A673 (cell line): ENCODE measurements at regions of chr6 and their contacts with region 1.

Region 1: GRCh38 chr6:17392978-17393891 is at the start of gene CAP2:
- DNase-seq: peak; percentile 88
- H3K4me3 ChIP-seq: peak within 1 kb of the TSS; percentile 84
- H3K27ac ChIP-seq: peak within 1 kb of the TSS; percentile 76
- H3K4me1 ChIP-seq: peaks cover 6% of the 10 kb centered on the region
- H3K27me3 ChIP-seq: no peaks in the 10 kb centered on the region
- CTCF ChIP-seq: 0 out of 2 replicates have a peak, but pooled peaks have one; percentile 15
- total RNA-seq, gene CAP2: 18.4 and 20.8 TPM in 2 replicates

Region 2: DNA sequence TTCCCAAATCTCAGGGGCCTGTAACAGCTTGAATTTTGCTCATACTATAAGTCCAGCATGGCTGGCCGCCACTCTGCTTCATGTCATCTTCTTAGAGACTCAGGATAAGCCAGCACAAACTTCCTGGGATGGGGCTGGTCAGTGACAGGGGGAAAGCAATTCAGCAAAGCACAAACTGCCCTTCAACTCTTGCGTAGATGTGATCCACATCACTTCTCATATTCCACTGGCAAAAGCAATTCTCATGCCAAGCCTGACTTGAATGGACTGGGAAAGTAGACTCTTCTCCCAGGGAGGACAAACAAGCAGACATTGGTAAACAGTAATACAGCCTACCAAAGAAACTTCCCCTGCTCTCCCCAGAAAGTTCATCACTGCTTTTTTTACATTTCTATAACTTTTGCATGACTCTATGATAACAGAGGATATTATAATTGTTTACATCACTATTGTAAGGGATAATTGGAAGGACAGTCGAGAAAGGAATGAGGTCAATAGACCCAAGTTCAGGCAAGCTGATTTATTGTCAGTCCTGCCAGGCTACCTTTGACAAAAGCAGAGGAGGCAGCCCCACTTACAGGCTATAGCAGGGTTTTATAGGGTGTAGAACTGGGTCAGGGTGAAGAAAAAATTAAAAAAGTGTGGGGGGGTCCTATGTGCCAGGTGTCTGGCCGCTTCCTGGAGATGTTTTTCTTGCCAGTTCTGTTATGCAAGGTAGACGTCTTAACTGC is 74.6 kb before region 1 on chr6:
- CTCF ChIA-PET with region 1: no interaction called
- POLR2A ChIA-PET with region 1: interaction called, 16 read pairs
- intact Hi-C with region 1: no loop called
- DNase-seq: no peak
- H3K4me3 ChIP-seq: no peak overlapping the region
- H3K27ac ChIP-seq: no peak overlapping the region
- H3K4me1 ChIP-seq: no peaks in the 10 kb centered on the region
- H3K27me3 ChIP-seq: no peaks in the 10 kb centered on the region
- CTCF ChIP-seq: no peak

Region 3: DNA sequence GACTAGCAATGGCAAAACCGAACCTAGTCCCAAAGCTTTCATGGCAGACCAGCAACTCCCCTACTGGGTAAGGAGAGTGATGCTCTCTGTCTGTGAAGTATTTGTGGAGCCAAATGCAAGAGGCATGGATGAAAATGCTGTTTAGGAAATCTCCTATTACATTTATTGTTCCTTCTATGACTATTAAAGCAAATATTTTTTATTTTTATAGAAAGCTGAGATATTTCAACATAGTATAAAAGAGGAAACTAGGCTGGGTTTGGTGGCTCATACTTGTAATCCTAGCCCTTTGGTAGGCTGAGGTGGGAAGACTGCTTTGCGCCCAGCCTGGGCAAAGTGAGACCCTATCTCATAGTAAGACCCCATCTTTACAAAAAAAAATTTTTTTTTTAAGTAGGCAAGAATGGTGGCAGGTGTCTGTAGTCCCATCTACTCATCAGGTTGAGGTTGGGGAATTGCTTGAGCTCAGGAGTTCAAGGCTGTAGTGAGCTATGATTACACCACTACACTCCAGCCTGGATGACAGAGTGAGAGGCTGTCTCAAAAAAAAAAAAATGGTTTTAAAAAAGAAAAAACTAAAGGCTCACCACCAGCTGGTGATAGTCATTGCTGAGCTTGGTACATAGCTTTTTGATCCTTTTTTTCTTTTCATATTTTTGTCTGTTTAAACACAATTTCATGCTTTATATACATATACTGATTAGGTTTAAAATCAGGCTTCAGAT is 773.2 kb after region 1 on chr6:
- CTCF ChIA-PET with region 1: no interaction called
- POLR2A ChIA-PET with region 1: no interaction called
- intact Hi-C with region 1: no loop called
- DNase-seq: no peak
- H3K4me3 ChIP-seq: no peak overlapping the region
- H3K27ac ChIP-seq: no peak overlapping the region
- H3K4me1 ChIP-seq: no peaks in the 10 kb centered on the region
- H3K27me3 ChIP-seq: no peaks in the 10 kb centered on the region
- CTCF ChIP-seq: no peak